Transverse colon (tissue), 4 donors: ENCODE measurements at regions of chr3 and their contacts with region 1.

Region 1: GRCh38 chr3:130759699-130760338 is 13.2 kb upstream of the PIK3R4 start:
- DNase-seq: peak; percentile 60
- H3K4me3 ChIP-seq: no peak overlapping the region
- H3K27ac ChIP-seq: no peak overlapping the region
- H3K4me1 ChIP-seq: no peaks in the 10 kb centered on the region
- H3K27me3 ChIP-seq: no peaks in the 10 kb centered on the region
- CTCF ChIP-seq: peak; percentile 76 to 85 (median 80)
- EP300 ChIP-seq: no peak
- POLR2A ChIP-seq: no peak

Region 2: GRCh38 chr3:130892759-130893375 is 133.0 kb after region 1 on chr3:
- in situ Hi-C with region 1: loop called in 3 of 4 experiments (anchors 5 to 10 kb)
- intact Hi-C with region 1: no loop called
- DNase-seq: peak; percentile 75
- H3K4me3 ChIP-seq: peak overlapping the region; percentile 72 to 97 (median 88)
- H3K27ac ChIP-seq: peak overlapping the region; percentile 95 to 98 (median 97)
- H3K4me1 ChIP-seq: peaks cover 0 to 26% (median 14%) of the 10 kb centered on the region in 4 donors
- H3K27me3 ChIP-seq: no peaks in the 10 kb centered on the region
- CTCF ChIP-seq: peak; percentile 82 to 94 (median 89)
- EP300 ChIP-seq: no peak
- POLR2A ChIP-seq: no peak

Region 3: DNA sequence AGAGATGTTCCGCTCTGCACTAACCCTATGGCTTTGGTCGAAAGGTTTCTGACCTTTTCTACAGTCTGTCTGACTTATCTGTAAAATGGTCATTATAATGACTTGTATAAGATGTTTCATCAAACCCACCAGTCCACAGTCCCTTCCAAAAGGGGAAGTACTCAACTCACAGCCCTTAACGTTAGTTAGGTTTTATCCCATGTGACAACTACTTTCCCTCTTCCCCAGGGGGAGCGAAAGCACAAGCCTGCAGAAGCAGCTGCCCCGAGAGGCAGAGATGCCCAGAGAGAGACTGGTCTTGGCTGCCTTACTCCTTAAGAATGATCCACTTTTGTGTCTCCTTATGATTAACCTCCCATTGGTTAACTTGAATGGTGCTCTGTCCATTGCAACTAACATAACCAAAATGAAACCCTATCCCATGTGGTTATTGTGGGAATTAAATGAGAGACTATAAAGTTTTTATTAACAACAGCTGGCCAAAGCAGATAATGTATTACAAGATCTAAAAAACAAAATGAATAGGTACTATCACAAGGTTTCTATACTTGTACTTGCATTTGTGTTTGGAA is 260.4 kb after region 1 on chr3:
- in situ Hi-C with region 1: loop called in 2 of 4 experiments (anchors 25 kb)
- intact Hi-C with region 1: no loop called
- DNase-seq: no peak
- H3K4me3 ChIP-seq: no peak overlapping the region
- H3K27ac ChIP-seq: no peak overlapping the region
- H3K4me1 ChIP-seq: peaks cover 1 to 50% (median 8%) of the 10 kb centered on the region in 4 donors
- H3K27me3 ChIP-seq: no peaks in the 10 kb centered on the region
- CTCF ChIP-seq: no peak
- EP300 ChIP-seq: no peak
- POLR2A ChIP-seq: no peak

Region 4: GRCh38 chr3:131216330-131216729 is 456.5 kb after region 1 on chr3:
- in situ Hi-C with region 1: no loop called
- intact Hi-C with region 1: no loop called
- DNase-seq: no peak
- H3K4me3 ChIP-seq: no peak overlapping the region
- H3K27ac ChIP-seq: no peak overlapping the region
- H3K4me1 ChIP-seq: no peaks in the 10 kb centered on the region
- H3K27me3 ChIP-seq: no peaks in the 10 kb centered on the region
- CTCF ChIP-seq: no peak
- EP300 ChIP-seq: no peak
- POLR2A ChIP-seq: no peak

Region 5: GRCh38 chr3:131381444-131382291 is 621.8 kb after region 1 on chr3 and contains the start of gene NUDT16:
- in situ Hi-C with region 1: loop called in 1 of 4 experiments (anchors 25 kb)
- intact Hi-C with region 1: no loop called
- DNase-seq: peak; percentile 100
- H3K4me3 ChIP-seq: peak within 1 kb of the TSS; percentile 63 to 96 (median 82)
- H3K27ac ChIP-seq: peak within 1 kb of the TSS; percentile 87 to 95 (median 93)
- H3K4me1 ChIP-seq: peaks cover 23 to 62% (median 39%) of the 10 kb centered on the region in 4 donors
- H3K27me3 ChIP-seq: no peaks in the 10 kb centered on the region
- CTCF ChIP-seq: peak in 1 of 5 experiments; percentile 19
- EP300 ChIP-seq: no peak
- POLR2A ChIP-seq: peak; percentile 97
- total RNA-seq, gene NUDT16: 45.6 to 57.9 (median 49.1) TPM